Psoas muscle (tissue), 8 donors: ENCODE measurements at regions of chr10 and their contacts with region 1.

Region 1: DNA sequence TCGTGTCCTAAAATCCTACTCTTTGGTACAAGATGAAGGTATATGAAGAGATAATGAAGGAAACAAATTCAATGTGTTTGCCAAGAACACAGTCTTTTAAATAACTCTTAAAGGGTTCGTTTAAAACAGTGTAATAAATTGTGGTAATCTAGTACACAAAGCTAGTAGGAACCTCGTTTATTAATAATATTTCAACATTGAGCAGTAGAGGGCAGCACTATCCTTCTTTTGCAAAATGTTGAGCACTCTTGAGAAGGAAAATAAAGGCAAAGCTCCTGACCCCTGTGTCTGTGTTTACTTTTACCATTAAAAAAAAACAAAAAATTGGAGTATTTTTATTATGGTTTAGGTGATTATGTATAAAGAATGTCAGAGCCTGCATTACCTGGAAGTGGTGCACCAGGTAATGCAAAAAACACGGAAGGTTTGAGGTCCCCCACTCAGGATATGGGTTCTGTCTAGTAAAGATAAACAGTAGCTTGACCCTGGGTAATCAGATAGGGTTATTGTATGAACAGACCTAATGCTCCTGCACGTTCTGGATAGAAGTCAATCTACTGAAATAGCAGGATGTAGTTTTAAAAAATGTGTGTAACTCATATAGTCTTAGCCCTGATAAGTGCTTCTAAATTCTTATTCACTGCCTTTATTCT is 5.7 kb upstream of the GOT1 start:
- DNase-seq: no peak
- ATAC-seq: peak; percentile 53 to 63 (median 54)
- H3K4me3 ChIP-seq: no peak overlapping the region
- H3K27ac ChIP-seq: peak overlapping the region; percentile 27
- H3K4me1 ChIP-seq: peaks cover 52% of the 10 kb centered on the region
- H3K27me3 ChIP-seq: no peaks in the 10 kb centered on the region
- CTCF ChIP-seq: peak; percentile 60

Region 2: GRCh38 chr10:99612167-99612831 is 176.2 kb after region 1 on chr10:
- intact Hi-C with region 1: loop called (anchors 2 to 5 kb)
- DNase-seq: no peak
- ATAC-seq: peak; percentile 60 to 83 (median 70)
- H3K4me3 ChIP-seq: no peak overlapping the region
- H3K27ac ChIP-seq: no peak overlapping the region
- H3K4me1 ChIP-seq: peaks cover 13% of the 10 kb centered on the region
- H3K27me3 ChIP-seq: no peaks in the 10 kb centered on the region
- CTCF ChIP-seq: peak; percentile 84

Region 3: DNA sequence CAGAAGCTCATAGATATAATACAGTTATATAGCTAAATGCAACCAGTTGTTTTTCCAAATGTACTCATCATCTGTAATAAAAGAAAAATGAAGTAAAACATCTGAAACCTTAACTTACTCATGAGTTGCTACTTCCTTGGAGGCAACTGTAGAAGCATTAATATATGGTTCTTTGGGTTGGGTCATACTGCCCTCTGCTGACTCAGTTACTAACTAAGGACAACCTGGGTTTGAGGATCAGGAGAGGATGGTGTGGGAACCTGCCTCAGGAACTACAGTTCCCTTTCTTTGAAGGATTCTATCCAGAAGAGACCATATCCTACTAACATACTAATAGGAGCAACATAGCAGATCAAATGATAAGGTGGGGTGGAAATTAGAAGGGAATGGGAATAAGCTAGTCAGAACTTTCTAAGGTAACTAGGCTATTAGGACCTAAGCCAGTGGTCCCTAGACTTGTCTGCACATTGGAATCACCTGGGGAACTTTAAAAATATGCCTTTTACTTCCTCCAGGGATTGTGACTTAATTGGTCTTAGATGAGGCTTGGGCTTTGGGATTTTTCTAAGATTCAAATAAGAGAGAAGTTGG is 275.1 kb after region 1 on chr10:
- intact Hi-C with region 1: loop called in 1 of 2 experiments (anchors 2 kb)
- DNase-seq: no peak
- ATAC-seq: peak; percentile 72 to 89 (median 84)
- H3K4me3 ChIP-seq: no peak overlapping the region
- H3K27ac ChIP-seq: no peak overlapping the region
- H3K4me1 ChIP-seq: peaks cover 12% of the 10 kb centered on the region
- H3K27me3 ChIP-seq: no peaks in the 10 kb centered on the region
- CTCF ChIP-seq: peak; percentile 45